AG04449 (cell line): ENCODE measurements at regions of chr11 and their contacts with region 1.

Region 1: GRCh38 chr11:8006349-8006977 is 19.3 kb downstream of the EIF3F start:
- DNase-seq: peak; percentile 21
- H3K4me3 ChIP-seq: no peak overlapping the region
- CTCF ChIP-seq: peak; percentile 89

Region 2: DNA sequence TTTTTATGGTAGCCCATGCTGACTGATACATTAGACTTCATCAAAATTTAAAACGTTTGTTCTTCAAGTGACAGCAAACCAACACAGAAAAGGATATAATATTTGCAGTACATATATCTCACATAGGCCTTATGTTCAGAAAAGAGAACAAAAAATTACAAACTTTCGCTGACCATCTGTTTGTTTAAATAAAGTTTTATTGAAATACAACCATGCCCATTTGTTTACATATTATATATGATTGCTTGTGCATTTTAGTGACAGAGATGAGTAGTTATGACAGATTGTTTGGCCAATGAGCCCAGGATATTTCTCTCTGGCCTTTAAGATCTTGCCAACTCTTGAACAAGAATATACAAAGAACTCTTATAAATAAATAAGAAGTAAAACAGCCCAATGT is 202.2 kb before region 1 on chr11:
- CTCF ChIA-PET with region 1: no interaction called
- POLR2A ChIA-PET with region 1: no interaction called
- DNase-seq: no peak
- H3K4me3 ChIP-seq: no peak overlapping the region
- CTCF ChIP-seq: no peak

Region 3: DNA sequence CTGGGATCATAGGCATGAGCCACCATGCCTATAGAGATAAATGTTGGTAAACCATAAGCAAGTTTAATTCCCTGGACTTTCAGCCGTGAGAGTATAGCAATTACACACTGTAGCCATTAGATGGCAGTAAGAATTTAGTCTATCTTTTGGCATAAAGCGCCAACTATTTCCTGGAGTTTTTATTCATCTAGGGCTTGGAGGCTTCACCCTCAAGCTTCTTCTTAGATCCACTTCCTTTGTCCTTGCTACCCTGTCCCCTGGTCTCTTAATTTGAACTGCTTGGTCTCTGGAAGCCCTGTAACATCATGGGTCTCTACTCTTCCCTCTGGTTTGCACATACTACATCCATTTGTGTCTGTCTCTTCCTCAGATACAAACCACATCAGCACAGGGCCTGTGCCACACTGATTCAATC is 113.6 kb before region 1 on chr11:
- CTCF ChIA-PET with region 1: interaction called, 18 read pairs
- POLR2A ChIA-PET with region 1: no interaction called
- DNase-seq: peak; percentile 28
- H3K4me3 ChIP-seq: no peak overlapping the region
- CTCF ChIP-seq: peak; percentile 56

Region 4: GRCh38 chr11:8018484-8019313 is 12.2 kb after region 1 on chr11:
- CTCF ChIA-PET with region 1: interaction called, 60 read pairs
- POLR2A ChIA-PET with region 1: no interaction called
- DNase-seq: no peak
- H3K4me3 ChIP-seq: peak overlapping the region; percentile 67
- CTCF ChIP-seq: no peak

Region 5: GRCh38 chr11:8033305-8034105 is 27.0 kb after region 1 on chr11:
- CTCF ChIA-PET with region 1: interaction called, 83 read pairs
- POLR2A ChIA-PET with region 1: no interaction called
- DNase-seq: no peak
- H3K4me3 ChIP-seq: no peak overlapping the region
- CTCF ChIP-seq: peak; percentile 90

Region 6: DNA sequence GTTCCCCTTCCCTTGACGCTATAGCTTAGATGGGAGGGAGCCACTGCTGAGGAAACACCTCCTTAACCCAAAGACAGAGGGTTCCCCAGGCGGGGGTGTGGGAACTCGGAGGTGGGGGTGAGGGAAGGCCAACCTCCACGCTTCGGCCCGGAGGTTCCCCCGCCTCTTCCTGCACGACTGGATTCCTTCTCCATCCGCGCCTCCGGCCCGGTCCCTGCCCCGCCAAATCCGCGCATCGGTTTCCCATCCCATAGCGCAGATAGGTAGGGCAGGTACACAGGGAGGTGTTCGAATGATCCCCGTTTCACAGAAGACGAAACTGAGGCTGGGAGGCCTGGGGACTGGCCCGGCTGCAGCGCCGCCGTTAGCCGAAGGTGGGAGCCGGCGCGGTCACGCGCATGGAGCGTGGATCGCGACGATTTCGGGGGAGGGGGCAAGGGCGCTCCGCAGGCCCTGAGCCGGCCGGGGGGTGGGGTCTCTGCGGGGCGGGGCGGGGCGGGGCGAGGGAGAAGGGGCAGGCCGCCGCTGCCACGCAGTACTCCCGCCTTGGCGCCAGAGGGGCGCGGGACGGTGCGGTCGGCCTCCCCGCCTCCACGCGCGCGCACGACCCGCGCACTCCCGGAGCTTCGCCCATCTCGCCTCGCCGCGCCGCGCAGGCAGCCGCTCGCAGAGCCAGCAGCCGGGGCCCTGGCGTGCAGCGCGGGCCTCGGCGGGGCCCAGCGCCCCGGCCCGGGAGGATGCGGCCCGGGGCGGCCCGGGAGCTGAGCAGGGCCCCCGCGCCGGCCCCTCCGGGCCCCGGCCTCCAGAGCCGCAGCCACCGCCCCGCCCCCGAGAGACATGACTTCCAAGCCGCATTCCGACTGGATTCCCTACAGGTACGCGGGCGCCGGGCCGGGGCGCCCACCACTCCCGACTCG is 74.5 kb after region 1 on chr11 and contains the start of gene TUB:
- CTCF ChIA-PET with region 1: interaction called, 1,552 read pairs
- POLR2A ChIA-PET with region 1: no interaction called
- DNase-seq: no peak
- H3K4me3 ChIP-seq: peak within 1 kb of the TSS; percentile 67
- CTCF ChIP-seq: no peak